ENCODE measurements at regions of chr4 and their contacts with region 1.

Region 1: GRCh38 chr4:130336585-130337217 is 1240.7 kb downstream of the C4orf33 start:
- H3K4me3 Mint-ChIP-seq: no peak overlapping the region
- H3K27ac Mint-ChIP-seq: no peak overlapping the region
- H3K4me1 Mint-ChIP-seq: no peaks in the 10 kb centered on the region
- H3K27me3 Mint-ChIP-seq: no peaks in the 10 kb centered on the region

Region 2: DNA sequence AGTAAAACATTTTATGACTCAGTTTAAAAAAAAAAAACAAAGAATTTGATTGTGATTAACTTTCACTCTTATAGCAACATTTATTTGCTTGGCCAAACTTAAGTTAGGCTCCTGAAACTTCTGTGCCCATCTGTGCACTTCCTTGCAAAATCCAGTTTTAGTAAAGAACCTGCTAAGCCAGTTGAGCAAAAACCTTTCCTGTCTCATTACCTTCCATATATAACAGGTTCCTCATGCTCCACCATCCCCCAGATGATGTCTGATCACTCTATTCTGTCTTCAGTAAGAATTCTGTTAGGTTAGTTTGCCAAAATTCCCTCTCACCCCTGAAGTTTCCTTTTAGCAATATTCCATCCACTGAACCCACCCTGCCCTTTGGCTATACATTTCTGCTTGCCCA is 40.2 kb before region 1 on chr4:
- intact Hi-C with region 1: loop called (anchors 1 kb)
- H3K4me3 Mint-ChIP-seq: no peak overlapping the region
- H3K27ac Mint-ChIP-seq: no peak overlapping the region
- H3K4me1 Mint-ChIP-seq: no peaks in the 10 kb centered on the region
- H3K27me3 Mint-ChIP-seq: no peaks in the 10 kb centered on the region